ENCODE measurements at regions of chr4 and their contacts with region 1.

Region 1: DNA sequence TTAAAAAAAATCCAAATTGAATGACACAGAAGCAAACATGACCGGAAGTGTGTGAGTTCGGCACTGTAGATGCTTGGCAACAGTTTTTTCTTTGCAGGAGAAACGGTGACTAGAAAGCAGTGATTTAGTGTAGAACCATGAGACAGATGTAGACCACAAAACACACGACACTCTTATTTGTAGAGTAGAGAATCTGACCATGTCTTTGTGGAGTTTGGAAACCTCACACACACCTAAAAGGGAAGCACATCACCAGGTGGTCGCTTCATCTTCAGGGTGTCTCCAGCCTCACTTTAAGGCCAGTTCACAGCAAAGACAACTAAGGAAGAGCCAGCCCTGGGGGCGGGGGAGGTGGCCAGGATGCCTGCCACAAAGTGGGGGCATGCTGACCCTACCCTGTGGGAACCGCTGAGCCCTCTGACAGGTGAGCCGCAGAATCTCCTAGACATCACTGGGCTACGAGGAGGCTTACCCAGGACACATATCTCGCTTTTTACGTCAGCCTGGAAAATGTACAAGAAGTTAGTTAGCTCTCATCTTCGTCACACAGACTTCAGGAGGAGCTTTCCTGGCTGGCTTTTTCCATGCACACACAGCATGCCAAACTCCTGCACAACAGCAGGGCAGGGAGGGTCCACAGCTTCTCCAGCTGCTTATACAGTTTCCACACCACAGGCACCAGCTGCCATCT is 64.4 kb upstream of the PDLIM3 start:
- DNase-seq: no peak
- H3K4me3 ChIP-seq: no peak overlapping the region
- CTCF ChIP-seq: no peak
- POLR2A ChIP-seq: no peak

Region 2: GRCh38 chr4:185471235-185472102 is 128.2 kb before region 1 on chr4 and contains the start of gene CCDC110:
- intact Hi-C with region 1: loop called (anchors 10 kb)
- DNase-seq: peak; percentile 87 to 99
- H3K4me3 ChIP-seq: peak within 1 kb of the TSS; percentile 64
- CTCF ChIP-seq: no peak
- POLR2A ChIP-seq: no peak
- total RNA-seq, gene CCDC110: 0.08 to 0.75 (median 0.61) TPM in 3 of 4 donors, not detected in the other

Measured in lower leg skin (tissue), 4 donors.